ENCODE measurements at regions of chr3 and their contacts with region 1.

Region 1: GRCh38 chr3:69306239-69307185 is 79.4 kb downstream of the FRMD4B start:
- DNase-seq: peak; percentile 35 to 82
- H3K4me3 ChIP-seq: peak overlapping the region in 1 of 2 donors; percentile 3
- H3K27ac ChIP-seq: peak overlapping the region; percentile 64 to 73
- H3K4me1 ChIP-seq: peaks cover 0 to 7% of the 10 kb centered on the region in 2 donors
- H3K27me3 ChIP-seq: no peaks in the 10 kb centered on the region
- CTCF ChIP-seq: peak; percentile 87 to 92 (median 88)

Region 2: GRCh38 chr3:69343875-69344274 is 37.4 kb after region 1 on chr3:
- intact Hi-C with region 1: no loop called
- DNase-seq: no peak
- H3K4me3 ChIP-seq: no peak overlapping the region
- H3K27ac ChIP-seq: no peak overlapping the region
- H3K4me1 ChIP-seq: peaks cover 0 to 5% of the 10 kb centered on the region in 2 donors
- H3K27me3 ChIP-seq: no peaks in the 10 kb centered on the region
- CTCF ChIP-seq: no peak

Region 3: DNA sequence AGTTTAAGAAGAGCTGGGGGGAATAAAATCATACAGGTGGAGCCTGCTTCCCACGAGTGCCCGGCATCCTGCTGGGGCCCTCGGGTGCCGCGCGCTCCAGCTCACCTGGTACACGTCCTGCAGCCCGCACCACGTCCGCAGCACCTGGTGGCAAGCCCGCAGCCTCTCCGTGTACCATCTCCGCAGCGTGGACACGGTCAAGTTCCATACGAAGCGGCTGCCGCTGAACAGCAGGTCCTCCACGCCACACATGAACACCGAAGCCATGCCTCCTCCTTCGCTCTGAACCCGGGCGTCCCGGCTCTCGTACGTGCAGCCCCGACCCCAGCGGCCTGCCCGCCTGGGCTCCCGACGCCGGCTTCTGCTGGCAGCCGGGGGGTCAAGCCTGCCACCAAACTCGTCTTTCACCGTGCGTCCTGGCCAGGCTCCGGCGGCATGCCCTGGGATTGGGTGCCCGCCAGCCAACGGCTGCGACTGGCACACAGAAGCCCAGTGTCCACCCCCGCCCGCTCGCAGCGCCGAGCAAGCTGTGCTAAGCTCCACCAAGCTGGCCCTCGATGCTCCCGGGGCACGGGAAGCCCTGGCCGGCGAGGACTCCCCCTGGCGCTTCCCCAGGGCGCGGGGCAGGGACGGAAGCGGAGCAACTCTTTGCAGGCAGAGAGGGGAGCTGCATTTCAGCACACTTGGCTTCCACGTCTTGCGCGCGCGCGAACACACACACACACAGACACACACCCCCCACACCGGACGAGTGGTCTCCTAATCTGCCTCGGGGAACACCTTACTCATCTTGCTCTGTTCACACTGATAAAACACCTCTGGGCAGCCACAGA is 79.4 kb after region 1 on chr3 and contains the start of gene FRMD4B:
- intact Hi-C with region 1: loop called (anchors 5 kb)
- DNase-seq: peak; percentile 50 to 86
- H3K4me3 ChIP-seq: peak within 1 kb of the TSS; percentile 65 to 86
- H3K27ac ChIP-seq: peak within 1 kb of the TSS; percentile 70
- H3K4me1 ChIP-seq: no peaks in the 10 kb centered on the region
- H3K27me3 ChIP-seq: no peaks in the 10 kb centered on the region
- CTCF ChIP-seq: peak in 2 of 3 experiments; percentile 23 to 25
- total RNA-seq, gene FRMD4B: 13.5 TPM

Region 4: DNA sequence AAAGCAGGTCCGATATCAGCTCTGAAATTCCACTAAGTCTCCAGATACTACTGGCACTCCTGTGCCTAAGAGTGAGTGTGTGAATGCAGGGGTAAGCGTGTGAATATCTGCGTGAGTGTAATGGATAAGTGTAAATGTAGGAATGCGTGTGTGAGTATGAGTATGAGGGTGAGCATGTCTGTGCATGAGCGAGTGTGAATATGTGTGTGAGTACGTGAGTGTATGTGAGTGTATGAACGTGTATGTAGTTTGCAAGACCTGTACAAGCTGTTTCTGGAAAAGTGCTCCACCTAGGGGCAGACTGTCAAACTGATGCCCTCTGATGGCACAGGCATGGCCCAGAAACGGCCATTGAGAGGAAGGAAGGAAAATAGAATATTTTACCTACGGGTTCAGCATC is 103.7 kb after region 1 on chr3:
- intact Hi-C with region 1: loop called (anchors 5 kb)
- DNase-seq: peak in 1 of 2 donors; percentile 81
- H3K4me3 ChIP-seq: peak overlapping the region in 1 of 2 donors; percentile 25
- H3K27ac ChIP-seq: peak overlapping the region in 1 of 2 donors; percentile 42
- H3K4me1 ChIP-seq: peaks cover 0 to 7% of the 10 kb centered on the region in 2 donors
- H3K27me3 ChIP-seq: no peaks in the 10 kb centered on the region
- CTCF ChIP-seq: peak; percentile 66 to 86 (median 83)

Region 5: GRCh38 chr3:69579306-69580041 is 273.0 kb after region 1 on chr3:
- intact Hi-C with region 1: no loop called
- DNase-seq: no peak
- H3K4me3 ChIP-seq: no peak overlapping the region
- H3K27ac ChIP-seq: no peak overlapping the region
- H3K4me1 ChIP-seq: no peaks in the 10 kb centered on the region
- H3K27me3 ChIP-seq: no peaks in the 10 kb centered on the region
- CTCF ChIP-seq: no peak